ENCODE measurements at regions of chr10 and their contacts with region 1.

Region 1: DNA sequence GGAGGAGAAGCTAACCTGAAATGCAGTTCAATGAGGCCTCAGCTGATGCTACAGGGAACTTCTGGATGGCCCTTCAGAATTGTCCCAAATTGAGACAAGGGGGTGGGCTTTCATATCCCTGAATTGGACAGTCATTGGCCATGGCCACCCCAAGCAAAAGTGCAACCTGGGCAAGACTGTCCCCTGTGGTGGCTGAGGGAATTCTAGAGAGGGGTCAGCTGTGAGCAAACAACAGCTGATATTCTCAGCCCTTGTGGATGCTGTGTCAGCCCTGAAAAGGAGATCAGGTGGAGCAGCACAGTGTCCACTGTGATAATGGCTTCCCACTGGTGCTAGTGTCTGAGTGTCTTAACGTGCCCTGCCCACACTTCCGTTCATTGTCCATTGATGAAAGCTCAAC is 76.6 kb downstream of the SLC16A9 start:
- DNase-seq: no peak
- ATAC-seq: no peak
- H3K4me3 ChIP-seq: no peak overlapping the region
- H3K27ac ChIP-seq: no peak overlapping the region
- H3K4me1 ChIP-seq: no peaks in the 10 kb centered on the region
- H3K27me3 ChIP-seq: no peaks in the 10 kb centered on the region
- CTCF ChIP-seq: no peak
- POLR2A ChIP-seq: no peak

Region 2: GRCh38 chr10:59817773-59818172 is 184.7 kb after region 1 on chr10:
- intact Hi-C with region 1: loop called (anchors 10 kb)
- DNase-seq: peak in 2 of 4 donors; percentile 22 to 43
- ATAC-seq: no peak
- H3K4me3 ChIP-seq: no peak overlapping the region
- H3K27ac ChIP-seq: no peak overlapping the region
- H3K4me1 ChIP-seq: peaks cover 5% of the 10 kb centered on the region
- H3K27me3 ChIP-seq: no peaks in the 10 kb centered on the region
- CTCF ChIP-seq: no peak
- POLR2A ChIP-seq: no peak

Region 3: DNA sequence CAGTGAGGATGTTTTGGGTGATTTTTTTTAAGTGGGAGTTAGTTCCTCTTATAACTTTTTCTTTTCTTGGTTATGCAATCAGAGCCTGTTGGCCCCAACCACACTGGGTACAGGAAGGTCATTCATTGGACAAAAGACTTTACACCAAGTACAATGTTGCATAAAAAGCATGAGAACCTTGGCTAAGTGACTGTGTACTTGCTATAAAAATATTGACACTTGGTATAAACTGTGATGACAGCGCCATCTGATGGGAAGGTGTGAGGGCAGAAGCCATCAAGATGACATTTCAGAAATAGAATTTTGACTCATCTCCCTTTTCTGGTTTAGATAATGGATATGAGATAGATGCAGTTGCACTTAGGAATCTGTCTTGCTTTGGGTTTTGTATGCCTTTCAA is 399.7 kb after region 1 on chr10:
- intact Hi-C with region 1: loop called (anchors 10 kb)
- DNase-seq: peak; percentile 53 to 78 (median 64)
- ATAC-seq: peak; percentile 84
- H3K4me3 ChIP-seq: no peak overlapping the region
- H3K27ac ChIP-seq: no peak overlapping the region
- H3K4me1 ChIP-seq: peaks cover 7% of the 10 kb centered on the region
- H3K27me3 ChIP-seq: no peaks in the 10 kb centered on the region
- CTCF ChIP-seq: peak; percentile 35 to 81 (median 71)
- POLR2A ChIP-seq: no peak

Measured in body of pancreas (tissue), 4 donors.